ENCODE measurements at regions of chr11 and their contacts with region 1.

Region 1: DNA sequence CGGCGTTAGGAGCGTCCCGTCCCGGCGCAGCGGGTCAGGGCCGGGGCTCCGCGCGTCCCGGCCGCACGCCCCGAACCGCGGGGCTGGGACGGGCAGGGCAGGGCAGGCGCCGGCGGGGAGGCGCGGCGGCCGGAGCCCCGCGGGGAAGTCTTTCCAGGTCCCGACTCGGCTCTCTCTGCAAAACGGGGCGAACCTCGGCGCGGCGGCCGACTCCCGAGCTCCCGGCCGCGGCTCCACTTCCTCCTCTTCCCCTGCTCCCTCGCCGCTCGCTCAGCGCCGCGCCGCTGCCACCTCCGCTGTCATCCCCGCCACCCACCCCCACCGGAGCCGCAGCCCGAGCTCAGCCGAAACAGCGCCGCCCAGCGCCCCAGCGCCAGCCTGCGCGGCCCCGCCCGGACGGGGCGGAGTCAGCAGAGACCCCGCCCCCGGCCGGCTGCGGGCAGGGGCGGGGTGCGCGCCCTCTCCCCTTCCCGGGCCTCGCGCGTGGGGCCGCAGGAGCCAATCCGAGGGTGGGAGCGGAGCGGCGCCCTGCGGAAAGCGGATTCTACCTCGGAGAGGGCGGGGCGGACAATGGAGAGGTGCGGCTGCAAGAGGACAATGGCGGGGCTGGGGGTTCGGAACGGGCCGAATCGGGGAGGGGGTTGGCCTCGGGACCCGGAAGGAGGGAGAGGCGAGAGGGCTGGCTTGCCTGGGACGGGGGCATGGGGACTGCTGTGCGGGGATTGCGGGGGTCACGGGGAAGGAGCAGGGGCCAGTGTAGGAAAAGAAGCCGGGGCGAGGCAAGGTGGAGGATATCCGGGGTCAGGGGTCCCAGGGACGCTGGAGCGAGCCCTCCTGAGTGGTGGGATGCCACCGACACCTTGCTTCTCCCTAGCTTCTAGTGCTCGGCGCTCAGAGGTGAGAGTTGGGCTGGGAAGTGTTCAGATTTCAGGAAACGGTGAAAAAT is at the start of gene GDPD5:
- DNase-seq: peak; percentile 89 to 94 (median 92)
- H3K4me3 ChIP-seq: peak within 1 kb of the TSS; percentile 65 to 67
- H3K4me3 Mint-ChIP-seq: peak within 1 kb of the TSS; percentile 89 to 98 (median 92)
- H3K27ac ChIP-seq: peak within 1 kb of the TSS; percentile 62
- H3K27ac Mint-ChIP-seq: peak within 1 kb of the TSS; percentile 82 to 96 (median 91)
- H3K4me1 ChIP-seq: peaks cover 44% of the 10 kb centered on the region
- H3K4me1 Mint-ChIP-seq: peaks cover 33 to 72% (median 48%) of the 10 kb centered on the region in 4 donors
- H3K27me3 ChIP-seq: no peaks in the 10 kb centered on the region
- H3K27me3 Mint-ChIP-seq: no peaks in the 10 kb centered on the region
- total RNA-seq, gene GDPD5: 141 to 160 TPM

Region 2: DNA sequence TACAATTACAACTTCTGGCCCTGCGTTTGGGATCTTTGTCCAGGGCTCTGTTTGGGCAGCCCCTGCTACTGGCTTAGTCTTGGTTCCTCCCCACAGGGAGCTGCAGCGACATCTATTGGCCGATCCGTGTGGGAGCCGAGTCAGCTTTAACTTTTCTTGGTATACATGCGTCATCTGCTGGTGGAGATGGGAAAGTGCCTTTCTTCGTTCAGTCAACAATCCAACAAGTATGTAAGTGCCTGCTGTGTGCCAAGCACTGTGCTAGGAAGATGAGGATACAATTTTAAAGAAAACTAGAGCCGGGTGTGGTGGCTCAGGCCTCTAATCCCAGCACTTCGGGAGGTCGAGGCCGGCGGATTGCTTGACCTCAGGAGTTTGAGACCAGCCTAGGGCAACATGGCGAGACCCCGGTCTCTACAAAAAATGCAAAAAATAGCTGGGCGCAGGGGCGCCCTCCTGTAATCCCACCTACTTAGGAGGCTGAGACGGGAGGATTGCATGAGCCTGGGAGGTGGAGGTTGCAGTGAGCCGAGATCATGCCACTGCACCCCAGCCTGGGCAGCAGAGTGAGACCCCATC is 277.1 kb before region 1 on chr11:
- CTCF ChIA-PET with region 1: no interaction called
- POLR2A ChIA-PET with region 1: no interaction called
- intact Hi-C with region 1: no loop called
- DNase-seq: peak; percentile 81 to 87 (median 84)
- H3K4me3 ChIP-seq: no peak overlapping the region
- H3K4me3 Mint-ChIP-seq: no peak overlapping the region
- H3K27ac ChIP-seq: no peak overlapping the region
- H3K27ac Mint-ChIP-seq: peak overlapping the region in 1 of 7 donors; percentile 47
- H3K4me1 ChIP-seq: no peaks in the 10 kb centered on the region
- H3K4me1 Mint-ChIP-seq: peaks cover 0 to 3% (median 1%) of the 10 kb centered on the region in 4 donors
- H3K27me3 ChIP-seq: no peaks in the 10 kb centered on the region
- H3K27me3 Mint-ChIP-seq: peaks cover 10 to 14% of the 10 kb centered on the region in 2 donors

Region 3: DNA sequence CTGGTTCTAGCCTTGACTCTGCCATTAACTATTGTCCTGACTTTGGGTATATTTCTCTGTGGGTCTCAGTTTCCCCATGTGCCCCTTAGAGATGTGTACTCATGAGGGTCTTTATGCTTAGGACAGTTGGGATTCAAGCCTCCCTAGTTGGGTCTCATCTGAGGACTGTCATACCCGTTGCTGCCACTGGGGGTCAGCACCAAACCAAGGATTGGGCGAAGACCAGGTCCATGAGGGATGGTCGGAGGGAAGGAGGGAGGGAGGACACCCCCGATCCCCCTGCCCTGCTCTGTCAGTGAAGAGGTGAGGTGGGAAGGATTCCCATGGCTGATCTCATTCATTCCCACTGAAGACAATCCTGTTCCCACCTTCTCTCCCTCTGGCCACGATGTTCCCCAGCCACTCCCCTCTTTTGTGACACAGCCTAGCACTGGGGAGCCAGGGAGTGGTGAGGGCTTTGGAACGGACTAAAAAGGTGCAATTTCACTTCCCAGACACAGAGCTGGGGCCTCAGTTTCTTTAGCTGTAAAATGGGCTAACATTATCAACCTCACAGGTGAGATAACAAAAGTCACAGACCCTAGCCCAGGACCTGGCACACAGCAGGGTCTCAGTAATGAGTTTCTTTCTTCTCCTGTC is 80.4 kb before region 1 on chr11:
- CTCF ChIA-PET with region 1: interaction called, 301 read pairs
- POLR2A ChIA-PET with region 1: interaction called, 12 read pairs
- intact Hi-C with region 1: loop called (anchors 1 kb)
- DNase-seq: peak; percentile 54 to 72 (median 63)
- H3K4me3 ChIP-seq: no peak overlapping the region
- H3K4me3 Mint-ChIP-seq: no peak overlapping the region
- H3K27ac ChIP-seq: no peak overlapping the region
- H3K27ac Mint-ChIP-seq: peak overlapping the region in 3 of 7 donors; percentile 29 to 45 (median 29)
- H3K4me1 ChIP-seq: peaks cover 5% of the 10 kb centered on the region
- H3K4me1 Mint-ChIP-seq: peaks cover 0 to 7% (median 3%) of the 10 kb centered on the region in 4 donors
- H3K27me3 ChIP-seq: no peaks in the 10 kb centered on the region
- H3K27me3 Mint-ChIP-seq: no peaks in the 10 kb centered on the region

Region 4: GRCh38 chr11:75492181-75492820 is 33.6 kb before region 1 on chr11:
- CTCF ChIA-PET with region 1: interaction called, 11 read pairs
- POLR2A ChIA-PET with region 1: interaction called, 6 read pairs
- intact Hi-C with region 1: loop called (anchors 1 kb)
- DNase-seq: peak; percentile 29 to 85 (median 46)
- H3K4me3 ChIP-seq: peak overlapping the region; percentile 23 to 31
- H3K4me3 Mint-ChIP-seq: peak overlapping the region; percentile 29 to 78 (median 54)
- H3K27ac ChIP-seq: peak overlapping the region; percentile 42
- H3K27ac Mint-ChIP-seq: peak overlapping the region; percentile 75 to 88 (median 84)
- H3K4me1 ChIP-seq: peaks cover 30% of the 10 kb centered on the region
- H3K4me1 Mint-ChIP-seq: peaks cover 17 to 53% (median 29%) of the 10 kb centered on the region in 4 donors
- H3K27me3 ChIP-seq: no peaks in the 10 kb centered on the region
- H3K27me3 Mint-ChIP-seq: no peaks in the 10 kb centered on the region

Region 5: DNA sequence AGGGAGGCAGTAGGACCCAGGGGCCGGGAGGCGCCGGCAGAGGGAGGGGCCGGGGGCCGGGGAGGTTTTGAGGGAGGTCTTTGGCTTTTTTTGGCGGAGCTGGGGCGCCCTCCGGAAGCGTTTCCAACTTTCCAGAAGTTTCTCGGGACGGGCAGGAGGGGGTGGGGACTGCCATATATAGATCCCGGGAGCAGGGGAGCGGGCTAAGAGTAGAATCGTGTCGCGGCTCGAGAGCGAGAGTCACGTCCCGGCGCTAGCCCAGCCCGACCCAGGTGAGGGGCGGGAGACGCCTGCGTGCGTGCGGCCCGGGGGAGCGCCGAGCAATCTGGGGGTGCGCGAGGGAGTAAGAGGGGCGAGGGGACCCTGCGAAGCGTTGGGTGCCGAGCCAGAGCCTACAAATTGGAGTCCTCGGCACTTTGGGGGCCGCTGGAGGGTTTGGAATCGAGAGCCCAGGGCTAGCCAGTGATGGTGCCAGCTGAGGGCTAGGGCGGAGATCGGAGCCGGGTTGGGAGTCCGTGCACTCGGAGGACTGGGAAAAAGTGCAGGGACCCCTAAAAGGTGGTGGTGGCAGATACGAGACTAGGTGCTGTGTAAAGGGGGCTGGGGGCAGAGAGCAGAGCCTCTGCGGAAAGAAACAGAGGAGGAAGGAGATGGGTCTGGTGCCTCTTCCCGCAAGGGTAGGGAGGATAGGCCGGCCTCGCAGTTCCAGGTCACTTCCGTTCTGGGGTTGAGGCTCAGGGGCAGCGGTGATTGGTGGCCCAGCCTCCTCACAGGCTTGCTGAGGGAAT is 36.4 kb after region 1 on chr11 and contains the start of gene SERPINH1:
- CTCF ChIA-PET with region 1: no interaction called
- POLR2A ChIA-PET with region 1: interaction called, 4 read pairs
- intact Hi-C with region 1: loop called (anchors 2 kb)
- DNase-seq: peak; percentile 43 to 67 (median 49)
- H3K4me3 ChIP-seq: peak within 1 kb of the TSS; percentile 86 to 96
- H3K4me3 Mint-ChIP-seq: peak within 1 kb of the TSS; percentile 93 to 99 (median 99)
- H3K27ac ChIP-seq: peak within 1 kb of the TSS; percentile 71
- H3K27ac Mint-ChIP-seq: peak within 1 kb of the TSS; percentile 91 to 98 (median 96)
- H3K4me1 ChIP-seq: peaks cover 20% of the 10 kb centered on the region
- H3K4me1 Mint-ChIP-seq: peaks cover 12 to 49% (median 33%) of the 10 kb centered on the region in 4 donors
- H3K27me3 ChIP-seq: no peaks in the 10 kb centered on the region
- H3K27me3 Mint-ChIP-seq: no peaks in the 10 kb centered on the region
- total RNA-seq, gene SERPINH1: 15.6 to 16.2 TPM

Measured in CD4-positive, alpha-beta memory T cell (primary cell).